Endothelial cell of umbilical vein (primary cell): ENCODE measurements at regions of chr16 and their contacts with region 1.

Region 1: DNA sequence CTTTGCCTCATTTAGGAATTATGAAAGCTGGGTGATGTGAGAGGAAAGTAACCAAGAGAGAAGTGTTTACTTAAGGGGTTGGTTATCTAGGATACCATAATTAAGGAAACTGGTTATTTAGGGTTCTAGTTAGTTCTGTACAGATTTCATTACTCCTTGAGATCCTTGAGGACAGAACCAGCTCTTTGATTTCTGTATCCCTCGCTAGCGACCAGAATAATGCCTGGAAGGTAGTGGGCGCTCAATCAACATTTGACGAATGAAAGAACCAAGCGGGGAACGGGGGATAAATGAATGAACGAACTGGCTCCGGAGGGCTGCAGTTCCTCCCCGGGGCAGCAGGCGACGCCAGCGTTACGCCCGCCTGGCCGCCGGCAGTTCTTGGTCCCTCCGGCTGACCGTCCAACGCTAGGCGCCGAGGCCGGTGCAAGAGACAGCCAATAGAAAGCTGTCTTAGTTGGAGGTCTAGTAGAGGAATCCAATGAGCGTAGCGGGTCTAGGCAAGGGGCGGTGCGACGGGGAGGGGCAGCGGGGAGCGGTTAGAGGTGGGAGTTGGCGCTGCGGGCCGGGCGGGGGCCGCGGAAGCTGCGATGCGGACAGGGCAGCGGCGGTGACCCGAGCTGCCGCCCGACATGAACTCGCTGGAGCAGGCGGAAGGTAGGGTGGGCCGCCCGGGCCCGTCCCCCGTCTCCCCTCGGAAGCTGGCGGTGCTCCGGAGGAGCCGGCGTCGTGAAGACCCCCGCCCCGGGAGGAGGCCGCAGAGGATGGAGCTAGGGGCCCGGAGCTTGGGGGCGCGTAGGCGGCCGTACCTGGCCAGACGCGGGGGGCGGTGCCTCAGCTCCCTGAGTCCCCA is at the start of gene CNEP1R1:
- DNase-seq: peak; percentile 98
- H3K4me3 ChIP-seq: peak within 1 kb of the TSS; percentile 86 to 94 (median 93)
- H3K27ac ChIP-seq: peak within 1 kb of the TSS; percentile 8
- H3K4me1 ChIP-seq: peaks cover 13% of the 10 kb centered on the region
- H3K27me3 ChIP-seq: peaks cover 2 to 6% of the 10 kb centered on the region in 2 experiments
- CTCF ChIP-seq: peak; percentile 99 to 100
- POLR2A ChIP-seq: peak; percentile 63
- total RNA-seq, gene CNEP1R1: 21.7 and 23.2 TPM in 2 replicates

Region 2: DNA sequence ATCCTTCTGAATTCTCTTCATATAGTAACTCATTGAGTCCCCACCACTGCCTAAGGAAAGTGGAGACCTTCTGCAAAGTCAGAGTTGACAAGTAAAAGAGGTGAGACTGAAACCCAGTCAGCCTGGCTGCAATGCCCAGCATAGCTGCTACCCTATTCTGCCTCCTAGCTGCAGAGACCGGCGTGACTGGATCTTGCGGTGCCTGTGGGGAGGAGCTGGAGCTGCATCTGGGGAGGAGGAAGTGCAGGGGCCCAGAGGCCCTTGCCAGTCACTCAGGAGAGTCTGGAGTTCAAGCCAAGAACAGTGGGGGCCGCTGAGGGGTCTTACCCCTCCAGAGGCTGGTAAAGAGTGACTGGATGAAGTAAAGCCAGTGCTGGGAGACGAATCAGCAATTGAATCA is 134.0 kb before region 1 on chr16:
- CTCF ChIA-PET with region 1: no interaction called
- POLR2A ChIA-PET with region 1: no interaction called
- dilution Hi-C with region 1: no loop called
- intact Hi-C with region 1: no loop called
- DNase-seq: peak; percentile 20
- H3K4me3 ChIP-seq: no peak overlapping the region
- H3K27ac ChIP-seq: no peak overlapping the region
- H3K4me1 ChIP-seq: no peaks in the 10 kb centered on the region
- H3K27me3 ChIP-seq: no peaks in the 10 kb centered on the region
- CTCF ChIP-seq: peak in 1 of 2 donors; percentile 44
- POLR2A ChIP-seq: no peak

Region 3: DNA sequence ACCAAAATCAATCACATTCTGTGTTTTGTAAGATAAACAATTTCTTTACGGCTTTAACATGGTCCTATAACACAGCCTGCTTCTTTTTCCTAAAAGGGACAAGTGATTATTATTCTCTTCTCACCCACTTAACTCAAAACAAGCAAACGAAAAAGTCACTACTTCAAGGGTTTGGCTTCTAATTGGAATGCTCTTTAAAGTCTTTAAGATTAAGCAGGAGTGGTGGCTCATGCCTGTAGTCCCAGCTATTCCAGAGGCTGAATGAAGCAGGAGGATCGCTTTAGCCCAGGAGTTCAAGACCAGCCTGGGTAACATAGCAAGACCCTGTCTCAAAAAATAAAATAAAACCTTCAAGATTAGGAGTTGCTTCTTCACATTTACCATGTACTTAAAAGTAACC is 66.5 kb before region 1 on chr16:
- CTCF ChIA-PET with region 1: interaction called, 12 read pairs
- POLR2A ChIA-PET with region 1: no interaction called
- dilution Hi-C with region 1: no loop called
- intact Hi-C with region 1: no loop called
- DNase-seq: no peak
- H3K4me3 ChIP-seq: no peak overlapping the region
- H3K27ac ChIP-seq: no peak overlapping the region
- H3K4me1 ChIP-seq: no peaks in the 10 kb centered on the region
- H3K27me3 ChIP-seq: peaks cover 0 to 2% of the 10 kb centered on the region in 2 experiments
- CTCF ChIP-seq: no peak
- POLR2A ChIP-seq: no peak

Region 4: GRCh38 chr16:50011707-50012106 is 13.2 kb before region 1 on chr16:
- CTCF ChIA-PET with region 1: interaction called, 10 read pairs
- POLR2A ChIA-PET with region 1: no interaction called
- dilution Hi-C with region 1: no loop called
- intact Hi-C with region 1: no loop called
- DNase-seq: no peak
- H3K4me3 ChIP-seq: no peak overlapping the region
- H3K27ac ChIP-seq: no peak overlapping the region
- H3K4me1 ChIP-seq: no peaks in the 10 kb centered on the region
- H3K27me3 ChIP-seq: no peaks in the 10 kb centered on the region
- CTCF ChIP-seq: no peak
- POLR2A ChIP-seq: no peak

Region 5: DNA sequence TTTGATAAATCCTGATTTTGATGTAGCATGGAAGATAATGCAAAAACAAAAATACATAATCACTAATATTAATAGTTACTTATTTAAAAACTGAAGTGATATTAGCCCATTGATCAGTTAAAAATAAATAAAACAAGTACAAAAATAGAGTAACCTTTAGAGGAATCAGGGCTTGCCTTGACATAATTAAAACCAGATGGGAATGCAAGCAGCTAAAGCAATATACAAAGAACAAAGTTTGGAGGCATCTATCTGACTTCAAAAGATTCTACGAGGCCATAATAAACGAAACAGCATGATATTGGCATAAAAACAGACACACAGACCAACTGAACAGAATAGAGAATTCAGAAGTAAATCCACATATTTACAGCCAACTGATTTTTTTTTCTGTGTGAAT is 25.9 kb after region 1 on chr16:
- CTCF ChIA-PET with region 1: interaction called, 9 read pairs
- POLR2A ChIA-PET with region 1: no interaction called
- dilution Hi-C with region 1: no loop called
- intact Hi-C with region 1: loop called (anchors 1 kb)
- DNase-seq: no peak
- H3K4me3 ChIP-seq: no peak overlapping the region
- H3K27ac ChIP-seq: no peak overlapping the region
- H3K4me1 ChIP-seq: no peaks in the 10 kb centered on the region
- H3K27me3 ChIP-seq: peaks cover 0 to 2% of the 10 kb centered on the region in 2 experiments
- CTCF ChIP-seq: no peak
- POLR2A ChIP-seq: no peak

Region 6: DNA sequence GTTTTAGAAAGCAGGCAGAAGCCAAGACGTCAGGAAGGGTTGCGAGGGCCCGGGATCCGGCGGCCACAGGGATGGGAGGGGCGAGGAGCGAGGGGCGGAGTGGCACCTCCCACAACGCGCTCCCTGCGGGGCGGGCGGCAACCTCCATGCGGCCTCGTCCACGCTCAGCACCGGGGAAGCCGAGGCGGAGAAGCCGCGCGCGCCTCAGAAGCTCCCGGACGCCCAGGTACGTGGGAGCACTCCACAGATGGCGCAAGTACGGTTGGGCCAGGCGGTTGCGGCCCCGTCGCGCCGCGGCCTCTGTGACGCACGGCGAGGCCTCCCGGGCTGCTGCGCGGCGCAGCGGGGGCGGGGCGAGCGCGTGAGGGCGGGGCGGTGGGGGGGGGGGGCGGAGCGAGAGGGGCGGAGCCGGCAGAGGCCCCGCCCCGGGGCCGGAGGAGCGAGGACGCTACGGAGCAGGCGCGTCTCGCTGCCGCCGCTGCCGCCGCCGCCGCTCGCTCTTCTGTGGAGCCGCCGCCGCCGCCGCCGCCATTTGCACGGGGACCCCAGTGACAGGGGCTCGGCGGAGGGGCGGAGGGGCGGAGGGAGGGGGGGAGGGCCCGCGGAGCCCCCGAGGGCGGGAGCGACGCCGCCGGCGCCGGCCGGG is 128.0 kb after region 1 on chr16 and contains the start of gene TENT4B:
- CTCF ChIA-PET with region 1: interaction called, 4 read pairs
- POLR2A ChIA-PET with region 1: no interaction called
- dilution Hi-C with region 1: no loop called
- intact Hi-C with region 1: loop called (anchors 2 kb)
- DNase-seq: peak; percentile 87
- H3K4me3 ChIP-seq: peak within 1 kb of the TSS; percentile 83 to 93 (median 83)
- H3K27ac ChIP-seq: peak within 1 kb of the TSS; percentile 89
- H3K4me1 ChIP-seq: peaks cover 17% of the 10 kb centered on the region
- H3K27me3 ChIP-seq: no peaks in the 10 kb centered on the region
- CTCF ChIP-seq: no peak
- POLR2A ChIP-seq: peak; percentile 79
- total RNA-seq, gene TENT4B: 13.1 TPM in 2 replicates

Region 7: DNA sequence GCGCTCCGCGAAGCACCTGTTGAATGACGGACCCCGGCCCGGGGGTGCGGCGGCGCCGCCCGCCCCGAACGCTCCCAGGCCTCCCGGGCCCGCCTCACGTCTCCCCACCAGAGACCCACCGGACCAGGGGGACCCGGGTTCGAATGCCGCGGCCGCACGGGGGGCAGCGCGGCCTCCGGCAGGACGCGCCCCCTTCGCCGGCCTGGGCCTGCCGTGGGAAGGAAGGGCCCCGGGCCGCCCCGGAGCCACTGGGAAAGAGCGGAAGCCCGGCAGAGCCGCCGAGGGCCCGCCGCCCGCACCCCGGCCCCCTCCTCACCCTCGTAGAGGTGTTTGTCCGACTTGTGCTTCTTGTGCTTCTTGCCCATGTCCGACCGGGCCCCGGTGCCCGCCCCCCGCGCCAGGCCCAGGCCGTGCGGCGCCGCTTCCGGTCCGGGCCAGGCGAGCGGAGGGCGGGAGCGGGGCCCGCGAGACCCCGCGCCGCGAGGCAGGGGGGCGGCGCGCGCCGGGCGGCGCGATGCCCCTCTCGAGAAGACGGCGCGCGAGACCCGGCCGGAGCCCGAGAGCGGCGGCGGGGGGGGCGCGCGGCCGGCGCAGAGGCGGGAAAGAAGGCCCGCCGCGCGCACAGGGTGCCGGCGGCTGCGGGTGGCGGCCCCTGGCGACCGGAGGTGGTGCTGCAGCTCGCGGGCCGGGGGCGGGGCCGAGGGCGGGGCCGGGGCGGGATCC is 343.7 kb after region 1 on chr16 and contains the start of gene BRD7:
- CTCF ChIA-PET with region 1: interaction called, 15 read pairs
- POLR2A ChIA-PET with region 1: no interaction called
- dilution Hi-C with region 1: no loop called
- intact Hi-C with region 1: loop called (anchors 5 kb)
- DNase-seq: peak; percentile 39
- H3K4me3 ChIP-seq: peak within 1 kb of the TSS; percentile 46 to 96 (median 87)
- H3K27ac ChIP-seq: peak within 1 kb of the TSS; percentile 63
- H3K4me1 ChIP-seq: peaks cover 8% of the 10 kb centered on the region
- H3K27me3 ChIP-seq: no peaks in the 10 kb centered on the region
- CTCF ChIP-seq: peak in 1 of 2 donors; percentile 48
- POLR2A ChIP-seq: no peak
- total RNA-seq, gene BRD7: 69.1 and 78.0 TPM in 2 replicates